ENCODE measurements at regions of chr19 and their contacts with region 1.

Region 1: DNA sequence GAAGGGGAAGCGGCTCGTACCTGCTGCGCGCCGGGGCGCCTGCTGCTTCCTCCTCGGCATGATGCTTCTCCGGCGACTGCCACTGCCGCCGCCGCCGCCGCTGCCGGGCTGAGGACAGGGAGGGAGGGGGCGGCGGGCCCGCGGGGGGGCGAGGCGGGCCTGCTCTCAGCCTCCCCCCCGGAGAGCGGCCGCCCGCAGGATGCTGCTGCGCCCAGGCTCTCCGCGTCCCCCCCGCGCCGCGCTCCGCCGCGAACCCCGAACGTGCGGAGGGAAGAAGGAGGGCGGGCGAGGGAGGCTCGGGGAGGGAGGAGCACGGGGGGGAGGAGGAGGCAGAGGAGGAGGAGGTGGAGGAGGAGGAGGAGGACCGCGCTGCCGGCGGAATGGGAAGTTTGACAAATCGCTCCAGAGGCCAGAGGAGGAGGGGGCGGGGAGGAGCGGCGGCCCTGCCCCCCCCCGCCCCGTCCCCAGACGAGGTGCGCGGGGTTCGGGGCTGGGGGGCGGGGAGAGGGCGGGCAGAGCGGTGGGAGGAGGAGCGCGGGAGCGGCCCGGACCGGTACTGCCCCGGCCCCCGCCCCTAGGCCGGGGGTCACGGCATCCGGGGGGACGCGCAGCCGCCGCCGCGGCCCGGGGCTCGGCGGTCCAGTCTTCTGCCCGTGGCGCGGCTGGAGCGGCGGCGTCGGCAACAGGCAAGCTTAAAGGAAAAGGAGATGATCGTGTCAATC is at the start of gene TSHZ3:
- DNase-seq: peak; percentile 82
- H3K4me3 ChIP-seq: peak within 1 kb of the TSS; percentile 90
- H3K27ac ChIP-seq: peak within 1 kb of the TSS; percentile 71
- H3K4me1 ChIP-seq: peaks cover 22% of the 10 kb centered on the region
- H3K27me3 ChIP-seq: no peaks in the 10 kb centered on the region
- CTCF ChIP-seq: no peak
- total RNA-seq, gene TSHZ3: 14.8 and 15.5 TPM in 2 replicates

Region 2: GRCh38 chr19:30696514-30696913 is 652.8 kb before region 1 on chr19:
- CTCF ChIA-PET with region 1: no interaction called
- POLR2A ChIA-PET with region 1: no interaction called
- intact Hi-C with region 1: loop called (anchors 10 kb)
- DNase-seq: peak; percentile 67
- H3K4me3 ChIP-seq: no peak overlapping the region
- H3K27ac ChIP-seq: no peak overlapping the region
- H3K4me1 ChIP-seq: peaks cover 31% of the 10 kb centered on the region
- H3K27me3 ChIP-seq: no peaks in the 10 kb centered on the region
- CTCF ChIP-seq: peak; percentile 73

Region 3: GRCh38 chr19:30784850-30785457 is 564.4 kb before region 1 on chr19:
- CTCF ChIA-PET with region 1: no interaction called
- POLR2A ChIA-PET with region 1: no interaction called
- intact Hi-C with region 1: loop called (anchors 10 kb)
- DNase-seq: peak; percentile 79
- H3K4me3 ChIP-seq: no peak overlapping the region
- H3K27ac ChIP-seq: no peak overlapping the region
- H3K4me1 ChIP-seq: peaks cover 17% of the 10 kb centered on the region
- H3K27me3 ChIP-seq: no peaks in the 10 kb centered on the region
- CTCF ChIP-seq: peak; percentile 88

Region 4: DNA sequence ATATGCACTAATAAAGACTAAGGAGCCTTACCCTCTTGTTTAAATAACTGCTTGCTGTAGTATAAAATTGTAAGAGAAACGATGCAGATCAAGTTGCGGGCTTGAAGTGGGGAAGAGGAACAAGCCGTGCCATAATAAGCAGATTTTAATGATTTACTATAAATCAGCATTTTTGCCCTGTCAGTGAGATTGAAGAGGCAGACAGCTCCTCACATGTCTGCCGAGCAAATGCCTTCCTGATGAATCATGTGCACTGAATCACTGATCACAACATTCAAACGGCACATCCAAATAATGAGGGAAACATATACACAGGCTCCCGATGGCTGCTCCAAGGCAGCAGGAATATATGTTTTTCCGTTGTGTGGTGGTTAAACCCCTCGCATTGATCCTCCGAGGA is 282.9 kb before region 1 on chr19:
- CTCF ChIA-PET with region 1: no interaction called
- POLR2A ChIA-PET with region 1: no interaction called
- intact Hi-C with region 1: loop called (anchors 10 kb)
- DNase-seq: peak; percentile 86
- H3K4me3 ChIP-seq: no peak overlapping the region
- H3K27ac ChIP-seq: peak overlapping the region; percentile 38
- H3K4me1 ChIP-seq: peaks cover 65% of the 10 kb centered on the region
- H3K27me3 ChIP-seq: no peaks in the 10 kb centered on the region
- CTCF ChIP-seq: no peak

Region 5: DNA sequence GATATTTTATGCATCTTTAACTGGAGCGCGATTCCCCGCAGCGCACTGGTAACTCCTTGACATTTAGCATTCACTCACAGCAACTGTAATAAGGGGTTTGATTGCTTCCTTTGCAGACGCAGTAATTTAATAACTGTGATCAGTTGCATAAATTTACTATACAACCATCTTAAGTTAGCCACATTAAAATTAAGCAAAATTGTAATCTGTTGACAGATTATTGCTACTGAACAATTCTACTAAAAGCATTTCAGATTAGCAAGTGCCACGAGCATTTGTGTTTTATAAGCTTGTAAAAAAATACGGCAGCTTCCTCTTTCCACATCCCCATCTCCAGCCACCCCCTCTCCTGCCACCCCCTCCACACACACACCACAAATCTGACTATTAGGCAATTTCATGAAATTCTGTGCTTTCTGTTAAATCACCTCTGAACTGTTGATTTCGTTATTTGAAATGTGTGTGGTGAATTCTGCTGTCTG is 44.4 kb before region 1 on chr19:
- CTCF ChIA-PET with region 1: no interaction called
- POLR2A ChIA-PET with region 1: no interaction called
- intact Hi-C with region 1: loop called (anchors 1 kb)
- DNase-seq: peak; percentile 48
- H3K4me3 ChIP-seq: no peak overlapping the region
- H3K27ac ChIP-seq: peak overlapping the region; percentile 26
- H3K4me1 ChIP-seq: peaks cover 16% of the 10 kb centered on the region
- H3K27me3 ChIP-seq: no peaks in the 10 kb centered on the region
- CTCF ChIP-seq: no peak

Region 6: DNA sequence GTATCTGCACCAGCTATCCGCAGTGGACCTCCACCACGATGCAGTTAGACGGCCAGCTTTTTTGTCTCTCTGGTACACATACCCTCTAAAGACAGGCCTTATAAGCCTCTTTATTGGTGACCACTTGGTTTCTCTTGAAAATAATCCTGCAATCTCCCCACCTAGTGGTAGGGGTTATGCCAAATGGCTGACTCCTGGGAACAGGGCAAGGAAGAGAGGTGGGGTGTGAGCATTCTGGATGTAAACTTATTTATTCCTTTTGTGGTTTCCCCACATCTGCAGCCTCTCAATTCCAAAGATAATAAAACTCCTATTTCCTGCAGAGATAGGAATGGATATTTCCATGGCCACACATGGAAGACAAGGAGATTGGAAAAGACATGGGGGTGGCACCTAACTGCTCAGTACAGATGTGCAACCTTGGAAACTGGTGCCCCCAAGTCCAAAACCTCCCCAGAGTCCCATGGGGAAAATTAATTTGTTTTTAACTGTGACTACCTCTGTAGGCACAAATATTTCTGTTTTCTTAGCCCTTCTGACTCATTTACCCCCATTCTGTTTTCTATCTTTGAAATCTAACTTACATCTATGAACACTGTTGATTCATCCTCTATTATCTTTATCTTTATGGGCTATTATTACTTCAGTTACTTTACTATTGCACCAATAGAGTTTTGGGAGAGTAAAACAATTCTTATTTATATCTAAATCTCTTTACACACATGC is 112.7 kb after region 1 on chr19:
- CTCF ChIA-PET with region 1: no interaction called
- POLR2A ChIA-PET with region 1: no interaction called
- intact Hi-C with region 1: loop called (anchors 10 kb)
- DNase-seq: no peak
- H3K4me3 ChIP-seq: no peak overlapping the region
- H3K27ac ChIP-seq: no peak overlapping the region
- H3K4me1 ChIP-seq: no peaks in the 10 kb centered on the region
- H3K27me3 ChIP-seq: no peaks in the 10 kb centered on the region
- CTCF ChIP-seq: 0 out of 2 replicates have a peak, but pooled peaks have one; percentile 27

Measured in A673 (cell line).